Posterior vena cava (tissue), 2 donors: ENCODE measurements at regions of chr1 and their contacts with region 1.

Region 1: GRCh38 chr1:110114837-110115183 is 2.6 kb downstream of the UBL4B start:
- DNase-seq: no peak

Region 2: GRCh38 chr1:110070282-110070669 is 44.5 kb before region 1 on chr1:
- intact Hi-C with region 1: no loop called
- DNase-seq: no peak

Region 3: DNA sequence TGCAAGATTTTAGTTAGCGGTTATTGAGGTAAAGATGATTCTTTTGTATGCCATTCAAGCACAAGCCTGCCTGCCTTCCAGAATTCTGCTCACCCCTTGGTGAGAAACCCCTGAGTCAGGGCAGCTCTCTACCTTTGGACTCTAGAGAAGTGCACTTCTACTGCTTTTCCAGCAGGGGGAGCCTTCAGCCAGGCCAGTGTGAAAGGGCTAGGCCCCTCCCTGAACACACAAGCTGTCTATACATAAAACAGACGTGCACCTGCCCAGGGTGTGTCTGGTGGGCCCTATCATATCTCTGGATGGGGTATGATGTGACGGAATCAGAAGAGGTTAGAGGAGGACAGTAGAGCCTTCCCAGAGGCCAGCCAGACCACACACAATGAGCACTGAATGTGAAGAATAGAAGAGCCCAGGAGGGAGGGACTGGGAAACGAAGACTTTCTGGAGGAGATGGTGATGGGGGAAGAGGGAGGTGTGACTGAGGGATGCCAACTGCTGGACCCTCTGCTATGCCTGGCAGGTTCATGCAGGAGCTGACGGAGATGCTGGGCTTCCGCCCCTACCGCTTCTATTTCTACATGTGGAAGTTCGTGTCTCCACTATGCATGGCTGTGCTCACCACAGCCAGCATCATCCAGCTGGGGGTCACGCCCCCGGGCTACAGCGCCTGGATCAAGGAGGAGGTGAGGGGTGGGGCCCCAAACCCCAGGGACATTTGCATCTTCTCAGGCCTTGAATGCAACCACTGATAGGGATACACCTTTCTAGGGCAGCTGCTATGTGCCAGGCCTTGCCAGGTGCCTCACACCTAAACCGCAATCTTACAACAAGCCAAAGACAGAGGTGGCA is 82.3 kb after region 1 on chr1:
- intact Hi-C with region 1: no loop called
- DNase-seq: no peak

Region 4: DNA sequence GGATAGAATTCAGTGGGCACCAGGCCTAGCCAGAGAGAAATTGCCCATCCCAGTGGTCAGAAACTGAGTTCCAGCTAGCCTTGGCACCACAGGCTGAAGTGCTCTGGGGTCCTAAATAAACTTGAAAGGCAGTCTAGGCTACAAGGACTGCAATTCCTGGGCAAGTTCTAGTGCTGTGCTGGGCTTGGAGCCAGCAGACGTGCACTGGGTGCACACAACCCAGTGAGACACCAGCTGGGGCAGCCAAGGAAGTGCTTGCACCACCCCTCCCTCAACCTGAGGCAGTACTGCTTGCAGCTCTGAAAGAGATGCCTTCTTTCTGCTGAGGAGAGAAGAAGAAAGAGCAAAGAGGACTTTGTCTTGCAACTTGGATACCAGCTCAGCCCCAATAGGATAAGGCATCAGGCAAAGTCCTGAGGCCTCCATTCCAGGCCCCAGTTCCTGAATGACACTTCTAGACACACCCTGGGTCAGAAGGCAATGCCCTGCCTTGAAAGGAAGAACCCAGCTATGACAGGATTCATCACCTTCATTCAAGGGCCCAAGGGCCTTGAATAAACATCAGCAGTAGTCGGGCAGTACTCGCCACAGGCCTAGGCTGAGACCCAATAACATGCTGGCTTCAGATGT is 1257.6 kb after region 1 on chr1:
- intact Hi-C with region 1: loop called in 1 of 2 experiments (anchors 5 kb)
- DNase-seq: no peak